Panc1 (cell line): ENCODE measurements at regions of chr1 and their contacts with region 1.

Region 1: GRCh38 chr1:225772323-225772768 is 5.3 kb upstream of the SRP9 start:
- DNase-seq: peak; percentile 78
- ATAC-seq: peak; percentile 94
- H3K4me3 ChIP-seq: no peak overlapping the region
- H3K27ac ChIP-seq: peak overlapping the region; percentile 71
- H3K4me1 ChIP-seq: peaks cover 38% of the 10 kb centered on the region
- H3K27me3 ChIP-seq: no peaks in the 10 kb centered on the region
- CTCF ChIP-seq: peak; percentile 93

Region 2: GRCh38 chr1:225474986-225475820 is 297.1 kb before region 1 on chr1:
- CTCF ChIA-PET with region 1: interaction called, 8 read pairs
- POLR2A ChIA-PET with region 1: no interaction called
- in situ Hi-C with region 1: no loop called
- intact Hi-C with region 1: loop called (anchors 2 kb)
- DNase-seq: no peak
- ATAC-seq: peak; percentile 90
- H3K4me3 ChIP-seq: peak overlapping the region in 1 of 2 experiments; percentile 26; a peak in 2 of 4 replicates
- H3K27ac ChIP-seq: no peak overlapping the region
- H3K4me1 ChIP-seq: no peaks in the 10 kb centered on the region
- H3K27me3 ChIP-seq: no peaks in the 10 kb centered on the region
- CTCF ChIP-seq: peak; percentile 100

Region 3: GRCh38 chr1:225554216-225554812 is 218.0 kb before region 1 on chr1:
- CTCF ChIA-PET with region 1: no interaction called
- POLR2A ChIA-PET with region 1: no interaction called
- in situ Hi-C with region 1: loop called (anchors 10 kb)
- intact Hi-C with region 1: loop called (anchors 1 kb)
- DNase-seq: no peak
- ATAC-seq: no peak
- H3K4me3 ChIP-seq: no peak overlapping the region
- H3K27ac ChIP-seq: no peak overlapping the region
- H3K4me1 ChIP-seq: no peaks in the 10 kb centered on the region
- H3K27me3 ChIP-seq: no peaks in the 10 kb centered on the region
- CTCF ChIP-seq: peak; percentile 64; the same call in 1 of the 2 replicates

Region 4: DNA sequence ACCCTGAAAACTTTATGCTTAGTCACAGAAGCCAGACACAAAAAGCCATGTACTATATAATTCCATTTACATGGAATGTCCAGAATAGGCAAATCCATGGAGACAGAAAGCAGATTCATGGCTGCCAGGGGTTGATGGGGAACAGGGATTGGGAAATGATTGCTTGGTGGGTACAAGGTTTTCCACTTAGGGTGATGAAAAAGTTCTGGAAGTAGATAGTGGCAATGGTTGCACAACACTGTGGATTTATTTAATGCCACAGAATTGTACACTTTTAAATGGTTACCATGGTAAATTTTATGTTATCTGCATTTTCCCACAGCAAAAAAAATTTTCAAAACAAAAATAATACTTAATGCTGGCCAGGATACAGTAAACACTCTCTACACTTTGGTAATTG is 160.1 kb before region 1 on chr1:
- CTCF ChIA-PET with region 1: interaction called, 12 read pairs
- POLR2A ChIA-PET with region 1: no interaction called
- in situ Hi-C with region 1: no loop called
- intact Hi-C with region 1: no loop called
- DNase-seq: no peak
- ATAC-seq: no peak
- H3K4me3 ChIP-seq: no peak overlapping the region
- H3K27ac ChIP-seq: no peak overlapping the region
- H3K4me1 ChIP-seq: peaks cover 32% of the 10 kb centered on the region
- H3K27me3 ChIP-seq: no peaks in the 10 kb centered on the region
- CTCF ChIP-seq: no peak

Region 5: DNA sequence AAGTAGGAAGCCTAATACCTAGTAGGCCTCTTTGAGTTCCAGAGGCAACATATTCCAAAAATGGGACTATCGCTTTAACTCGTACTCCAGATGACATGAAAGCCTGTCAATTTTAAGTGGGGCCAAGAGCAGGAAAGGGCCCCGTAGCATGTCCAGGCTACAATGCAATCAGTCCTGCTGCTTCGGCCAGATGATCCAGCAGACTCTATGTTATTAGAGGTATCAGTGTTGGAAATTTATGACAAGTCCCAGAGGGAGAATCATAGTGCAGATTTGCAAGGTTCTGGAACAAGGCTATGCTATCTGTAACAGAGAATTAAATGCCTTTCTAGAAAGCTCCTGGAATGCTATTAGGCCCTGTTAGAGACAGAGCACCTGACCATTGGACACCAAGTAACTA is 51.4 kb before region 1 on chr1:
- CTCF ChIA-PET with region 1: no interaction called
- POLR2A ChIA-PET with region 1: interaction called, 15 read pairs
- in situ Hi-C with region 1: no loop called
- intact Hi-C with region 1: no loop called
- DNase-seq: no peak
- ATAC-seq: no peak
- H3K4me3 ChIP-seq: no peak overlapping the region
- H3K27ac ChIP-seq: no peak overlapping the region
- H3K4me1 ChIP-seq: no peaks in the 10 kb centered on the region
- H3K27me3 ChIP-seq: no peaks in the 10 kb centered on the region
- CTCF ChIP-seq: no peak